Activated naive CD4-positive, alpha-beta T cell treated with anti-CD3 and anti-CD28 coated beads for 36 hours (primary cell): ENCODE measurements at regions of chr7 and their contacts with region 1.

Region 1: DNA sequence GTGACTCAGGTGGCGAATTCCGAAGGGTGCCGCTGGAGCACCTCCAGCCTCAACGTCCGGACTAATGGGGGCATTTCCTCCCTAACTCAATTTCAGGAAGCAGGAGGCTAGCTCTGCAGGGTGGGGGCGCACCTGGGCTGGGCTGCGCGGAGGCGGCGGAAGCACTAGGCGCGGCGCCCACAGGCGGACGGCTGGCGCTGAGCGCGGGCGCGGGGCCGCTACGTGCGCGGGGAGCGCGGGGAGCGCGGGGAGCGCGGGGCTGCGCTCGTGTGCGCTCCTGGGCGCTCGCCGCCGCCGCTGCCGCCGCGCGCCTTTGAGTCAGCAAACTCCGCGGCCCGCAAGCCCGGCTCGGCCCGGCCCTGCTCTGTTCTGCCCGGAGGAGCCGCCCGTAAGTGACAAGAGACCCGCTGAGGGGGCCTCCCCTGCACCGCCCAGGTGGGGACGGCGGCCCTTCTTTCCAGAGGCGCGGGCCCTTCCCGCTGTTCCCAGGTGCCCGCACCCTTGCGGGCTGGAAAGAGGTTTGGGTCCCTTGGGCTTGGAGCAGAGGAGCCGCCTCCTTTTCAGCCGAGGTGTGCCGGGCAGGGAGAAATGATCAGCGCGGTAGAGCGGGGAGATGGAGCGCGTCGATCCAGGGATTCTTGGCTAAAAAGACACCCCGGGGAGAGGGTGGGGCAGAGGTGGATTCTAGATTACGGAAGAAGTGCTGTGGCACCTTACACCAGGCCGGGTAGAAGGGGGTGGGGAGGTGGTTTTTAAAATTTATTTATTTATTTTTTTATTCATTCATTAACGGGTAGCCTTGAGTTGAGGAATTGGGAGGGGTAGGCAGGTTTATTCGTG is at the start of gene SNX10:
- DNase-seq: peak; percentile 78
- H3K4me3 Mint-ChIP-seq: peak within 1 kb of the TSS; percentile 88
- H3K27ac Mint-ChIP-seq: peak within 1 kb of the TSS; percentile 59
- H3K4me1 Mint-ChIP-seq: peaks cover 26% of the 10 kb centered on the region
- H3K27me3 Mint-ChIP-seq: no peaks in the 10 kb centered on the region
- total RNA-seq, gene SNX10: 17.0 to 17.5 TPM

Region 2: DNA sequence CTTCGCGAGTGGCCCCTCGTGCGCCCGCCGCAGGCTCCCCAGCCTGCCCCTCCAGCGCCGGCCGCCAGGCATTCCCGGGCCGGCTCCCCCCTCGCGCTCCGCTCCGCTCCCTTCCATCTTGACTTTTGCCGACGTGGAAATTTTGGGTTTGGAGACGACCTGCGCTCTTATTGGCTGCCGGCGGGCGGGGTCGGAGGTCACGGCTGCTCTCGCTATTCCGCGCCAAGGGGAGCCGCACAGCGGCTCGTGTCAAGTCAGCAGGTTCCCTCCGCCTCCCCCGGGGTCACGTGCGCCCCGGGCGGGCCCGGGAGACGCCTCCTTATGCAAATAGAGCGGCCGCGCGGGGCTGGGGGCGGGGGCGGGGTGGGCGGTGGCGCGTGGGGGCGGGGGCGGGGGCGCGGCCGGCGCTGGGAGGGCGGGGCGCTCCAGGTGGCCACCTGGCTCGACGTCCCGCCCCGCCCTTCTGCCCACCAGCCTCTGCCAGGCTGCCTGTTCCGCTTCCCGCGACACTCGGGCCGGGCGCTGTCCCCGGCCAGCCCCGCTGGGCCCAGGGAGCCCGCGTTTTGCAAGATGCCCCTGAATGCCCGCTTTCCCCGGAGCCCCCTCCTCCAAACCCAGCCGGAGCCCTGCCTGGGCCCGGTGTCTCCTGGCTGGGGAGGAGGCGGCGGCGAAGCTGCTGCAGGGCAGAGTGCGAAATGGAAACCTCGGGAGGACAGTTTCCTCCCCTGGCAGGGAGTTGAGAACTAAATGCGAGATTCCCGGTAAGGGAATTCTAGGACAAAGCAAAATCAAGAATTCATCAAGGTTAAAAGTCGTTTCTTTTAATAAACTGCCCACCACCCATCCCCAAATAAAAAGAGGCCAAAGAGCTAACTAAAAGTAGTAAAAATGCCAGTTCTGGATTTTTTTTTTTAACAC is 340.6 kb before region 1 on chr7:
- CTCF ChIA-PET with region 1: no interaction called
- intact Hi-C with region 1: loop called (anchors 5 kb)
- DNase-seq: peak; percentile 91
- H3K4me3 Mint-ChIP-seq: peak overlapping the region; percentile 88
- H3K27ac Mint-ChIP-seq: no peak overlapping the region
- H3K4me1 Mint-ChIP-seq: peaks cover 16% of the 10 kb centered on the region
- H3K27me3 Mint-ChIP-seq: peaks cover 7% of the 10 kb centered on the region

Region 3: DNA sequence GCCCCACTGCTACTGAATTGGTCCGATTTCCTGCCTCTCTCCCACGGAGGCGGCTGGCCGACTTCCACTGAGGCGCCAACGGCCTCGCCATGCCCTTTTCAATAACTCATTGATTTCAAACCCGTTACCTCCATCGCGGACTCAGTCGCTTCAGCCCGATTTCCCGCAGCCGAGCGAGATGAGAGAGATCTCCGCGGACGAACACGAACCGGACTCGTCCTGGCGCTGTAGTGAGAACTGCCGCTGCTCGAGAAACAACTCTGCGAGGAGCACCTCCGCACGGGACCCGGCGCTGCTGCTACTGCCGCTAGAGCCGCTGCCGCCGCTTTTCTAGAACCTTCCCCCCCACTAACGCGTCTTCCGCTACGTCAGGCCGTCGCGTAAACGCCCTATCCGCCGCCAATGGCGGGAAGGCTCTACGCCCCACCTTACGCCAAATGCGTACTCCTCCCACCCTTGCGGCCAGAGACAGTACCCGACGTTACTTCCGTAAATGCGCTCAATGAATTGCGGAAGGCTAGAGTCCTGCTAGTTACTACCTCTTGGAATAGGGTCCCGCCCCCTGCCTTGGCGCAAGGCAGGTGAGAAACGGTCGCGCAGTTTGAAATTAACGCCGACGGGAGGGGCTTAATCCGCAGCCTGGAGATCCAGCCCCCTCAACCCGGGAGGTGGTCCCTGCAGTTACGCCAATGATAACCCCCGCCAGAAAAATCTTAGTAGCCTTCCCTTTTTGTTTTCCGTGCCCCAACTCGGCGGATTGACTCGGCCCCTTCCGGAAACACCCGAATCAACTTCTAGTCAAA is 91.3 kb before region 1 on chr7 and contains the start of gene HNRNPA2B1:
- CTCF ChIA-PET with region 1: interaction called, 5 read pairs
- intact Hi-C with region 1: loop called (anchors 1 kb)
- DNase-seq: peak; percentile 98
- H3K4me3 Mint-ChIP-seq: peak within 1 kb of the TSS; percentile 100
- H3K27ac Mint-ChIP-seq: peak within 1 kb of the TSS; percentile 100
- H3K4me1 Mint-ChIP-seq: peaks cover 38% of the 10 kb centered on the region
- H3K27me3 Mint-ChIP-seq: no peaks in the 10 kb centered on the region
- total RNA-seq, gene HNRNPA2B1: 925 to 950 TPM

Region 4: GRCh38 chr7:26365077-26365900 is 73.4 kb after region 1 on chr7:
- CTCF ChIA-PET with region 1: interaction called, 6 read pairs
- intact Hi-C with region 1: loop called (anchors 1 kb)
- DNase-seq: peak; percentile 71
- H3K4me3 Mint-ChIP-seq: no peak overlapping the region
- H3K27ac Mint-ChIP-seq: no peak overlapping the region
- H3K4me1 Mint-ChIP-seq: peaks cover 9% of the 10 kb centered on the region
- H3K27me3 Mint-ChIP-seq: no peaks in the 10 kb centered on the region

Region 5: GRCh38 chr7:26420422-26421019 is 128.6 kb after region 1 on chr7:
- CTCF ChIA-PET with region 1: no interaction called
- intact Hi-C with region 1: no loop called
- DNase-seq: no peak
- H3K4me3 Mint-ChIP-seq: no peak overlapping the region
- H3K27ac Mint-ChIP-seq: no peak overlapping the region
- H3K4me1 Mint-ChIP-seq: no peaks in the 10 kb centered on the region
- H3K27me3 Mint-ChIP-seq: peaks cover 6% of the 10 kb centered on the region

Region 6: GRCh38 chr7:27150568-27151340 is 858.8 kb after region 1 on chr7:
- CTCF ChIA-PET with region 1: no interaction called
- intact Hi-C with region 1: loop called (anchors 10 kb)
- DNase-seq: peak; percentile 67
- H3K4me3 Mint-ChIP-seq: peak overlapping the region; percentile 64
- H3K27ac Mint-ChIP-seq: no peak overlapping the region
- H3K4me1 Mint-ChIP-seq: peaks cover 38% of the 10 kb centered on the region
- H3K27me3 Mint-ChIP-seq: peaks cover 87% of the 10 kb centered on the region